Caco-2 (cell line): ENCODE measurements at regions of chr16 and their contacts with region 1.

Region 1: GRCh38 chr16:19589771-19590302 is 34.3 kb downstream of the VPS35L start:
- DNase-seq: no peak
- H3K4me3 ChIP-seq: no peak overlapping the region
- H3K4me3 Mint-ChIP-seq: no peak overlapping the region
- H3K27ac Mint-ChIP-seq: no peak overlapping the region
- H3K4me1 ChIP-seq: no peaks in the 10 kb centered on the region
- H3K4me1 Mint-ChIP-seq: peaks cover 3% of the 10 kb centered on the region
- H3K27me3 ChIP-seq: no peaks in the 10 kb centered on the region
- H3K27me3 Mint-ChIP-seq: no peaks in the 10 kb centered on the region
- CTCF ChIP-seq: no peak

Region 2: DNA sequence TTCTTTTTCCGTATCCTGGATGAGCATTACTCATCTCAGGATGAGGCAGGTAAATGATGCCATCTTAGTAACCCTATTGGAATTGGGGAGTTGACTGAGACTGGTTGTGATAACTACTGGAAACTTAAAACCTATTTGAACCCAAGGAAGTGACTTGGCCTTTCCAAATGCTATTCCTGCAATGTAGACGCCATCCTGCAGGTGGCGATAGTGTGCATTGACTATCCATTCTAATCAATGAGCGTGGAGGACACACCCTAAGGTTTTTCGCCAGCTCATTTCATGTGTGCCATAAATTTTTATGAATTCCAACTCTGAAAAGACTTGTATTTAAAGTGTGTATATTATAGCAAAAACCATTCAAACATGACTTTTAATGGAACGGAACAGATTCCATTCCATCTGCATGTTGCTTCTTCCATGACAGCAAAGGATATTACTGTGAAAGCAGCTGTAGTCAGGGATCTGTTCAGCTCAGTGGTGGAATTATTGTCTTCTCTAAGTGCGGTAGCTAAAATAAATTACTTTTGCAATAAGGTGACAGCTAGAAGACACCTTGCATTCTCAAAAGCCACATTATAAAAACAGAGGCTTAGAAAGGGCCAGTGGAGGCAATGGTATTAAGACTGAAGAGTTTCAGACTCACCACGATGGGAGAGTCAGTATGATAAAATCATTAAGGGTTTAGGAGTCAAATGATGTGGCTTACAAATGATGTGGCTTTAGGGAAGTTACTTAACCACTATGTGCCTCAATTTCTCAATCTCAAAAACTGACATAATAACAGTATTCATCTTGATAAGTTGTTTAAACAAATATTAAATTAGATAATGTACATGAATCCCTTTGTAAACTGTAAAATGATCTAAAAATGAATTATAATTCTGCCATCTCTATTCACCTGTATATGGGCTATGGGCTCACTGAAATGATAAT is 366.3 kb before region 1 on chr16:
- CTCF ChIA-PET with region 1: no interaction called
- POLR2A ChIA-PET with region 1: no interaction called
- intact Hi-C with region 1: no loop called
- DNase-seq: peak in 1 of 2 experiments; percentile 35
- H3K4me3 ChIP-seq: no peak overlapping the region
- H3K4me3 Mint-ChIP-seq: no peak overlapping the region
- H3K27ac Mint-ChIP-seq: no peak overlapping the region
- H3K4me1 ChIP-seq: 0 out of 2 replicates have a peak, but pooled peaks cover 3% of the 10 kb centered on the region
- H3K4me1 Mint-ChIP-seq: peaks cover 20% of the 10 kb centered on the region
- H3K27me3 ChIP-seq: no peaks in the 10 kb centered on the region
- H3K27me3 Mint-ChIP-seq: no peaks in the 10 kb centered on the region
- CTCF ChIP-seq: peak; percentile 45 to 54

Region 3: DNA sequence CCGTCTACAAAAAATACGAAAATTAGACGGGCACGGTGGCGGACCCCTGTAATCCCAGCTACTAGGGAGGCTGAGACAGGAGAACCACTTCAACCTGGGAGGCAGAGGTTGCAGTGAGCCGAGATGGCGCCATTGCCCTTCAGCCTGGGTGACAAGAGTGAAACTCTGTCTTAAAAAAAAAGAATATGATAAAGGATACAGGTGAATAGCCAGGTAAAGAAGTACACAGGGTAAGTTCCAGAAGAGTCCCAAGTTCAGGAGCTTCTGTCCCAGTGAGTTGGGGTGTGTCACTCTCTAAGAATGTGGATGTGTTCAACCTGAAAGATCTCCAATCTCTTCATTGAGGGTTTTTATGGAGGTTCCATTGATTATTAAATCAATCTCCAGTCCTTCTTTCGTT is 165.4 kb before region 1 on chr16:
- CTCF ChIA-PET with region 1: no interaction called
- POLR2A ChIA-PET with region 1: no interaction called
- intact Hi-C with region 1: no loop called
- DNase-seq: no peak
- H3K4me3 ChIP-seq: no peak overlapping the region
- H3K4me3 Mint-ChIP-seq: no peak overlapping the region
- H3K27ac Mint-ChIP-seq: no peak overlapping the region
- H3K4me1 ChIP-seq: no peaks in the 10 kb centered on the region
- H3K4me1 Mint-ChIP-seq: no peaks in the 10 kb centered on the region
- H3K27me3 ChIP-seq: no peaks in the 10 kb centered on the region
- H3K27me3 Mint-ChIP-seq: no peaks in the 10 kb centered on the region
- CTCF ChIP-seq: no peak

Region 4: GRCh38 chr16:19502395-19503131 is 87.3 kb before region 1 on chr16:
- CTCF ChIA-PET with region 1: interaction called, 11 read pairs
- POLR2A ChIA-PET with region 1: no interaction called
- intact Hi-C with region 1: no loop called
- DNase-seq: peak; percentile 70 to 74
- H3K4me3 ChIP-seq: no peak overlapping the region
- H3K4me3 Mint-ChIP-seq: no peak overlapping the region
- H3K27ac Mint-ChIP-seq: no peak overlapping the region
- H3K4me1 ChIP-seq: 0 out of 2 replicates have a peak, but pooled peaks cover 4% of the 10 kb centered on the region
- H3K4me1 Mint-ChIP-seq: peaks cover 9% of the 10 kb centered on the region
- H3K27me3 ChIP-seq: no peaks in the 10 kb centered on the region
- H3K27me3 Mint-ChIP-seq: no peaks in the 10 kb centered on the region
- CTCF ChIP-seq: peak; percentile 69 to 72